Psoas muscle (tissue), 8 donors: ENCODE measurements at regions of chr1 and their contacts with region 1.

Region 1: GRCh38 chr1:15835741-15836510 is 11.6 kb upstream of the SPEN start:
- DNase-seq: peak; percentile 100
- ATAC-seq: peak; percentile 83 to 88 (median 86)
- H3K4me3 ChIP-seq: peak overlapping the region; percentile 92
- H3K27ac ChIP-seq: peak overlapping the region; percentile 100
- H3K4me1 ChIP-seq: peaks cover 11% of the 10 kb centered on the region
- H3K27me3 ChIP-seq: no peaks in the 10 kb centered on the region
- CTCF ChIP-seq: no peak

Region 2: DNA sequence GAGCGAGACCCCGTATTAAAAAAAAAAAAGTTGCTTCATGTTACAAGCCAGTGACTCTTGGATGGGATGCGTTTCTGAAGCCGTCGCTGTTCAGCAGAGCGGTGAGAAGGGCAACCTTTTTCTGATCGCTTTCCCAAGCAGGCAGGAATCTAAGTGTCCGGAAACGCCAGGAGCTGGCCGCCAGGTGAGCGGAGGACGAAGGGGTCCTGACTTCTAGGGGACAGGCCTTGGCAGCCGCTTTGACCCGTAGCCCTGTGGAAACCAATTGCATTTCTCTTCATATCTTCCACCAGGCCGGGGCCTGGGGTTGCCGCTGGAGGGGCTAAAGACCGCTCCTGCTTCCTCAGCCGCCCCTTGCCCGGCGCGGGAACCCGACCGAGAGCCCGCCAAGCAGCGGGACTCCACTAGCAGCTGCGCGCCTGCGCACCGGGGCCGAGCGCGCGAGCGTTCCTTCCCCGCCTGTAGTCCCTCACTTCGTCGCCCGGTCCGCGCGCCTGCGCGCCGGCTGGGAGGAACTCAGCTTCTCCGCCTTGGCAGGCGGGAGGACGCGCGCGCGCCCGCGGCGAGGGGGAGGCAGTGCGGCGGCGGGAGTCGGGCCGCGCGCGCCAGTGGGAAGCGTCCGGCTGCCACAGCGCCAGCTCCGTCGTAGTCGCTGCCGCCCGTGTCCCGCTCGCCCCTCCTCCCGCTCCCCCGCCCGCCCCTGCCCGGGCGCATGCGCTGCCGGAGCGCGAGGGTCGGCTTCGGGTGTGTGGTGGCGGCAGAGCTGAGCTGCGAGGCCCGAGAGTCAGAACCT is 11.4 kb after region 1 on chr1 and contains the start of gene SPEN:
- intact Hi-C with region 1: loop called in 1 of 2 experiments (anchors 1 kb)
- DNase-seq: peak; percentile 99 to 100
- ATAC-seq: peak; percentile 87 to 93 (median 88)
- H3K4me3 ChIP-seq: peak within 1 kb of the TSS; percentile 95
- H3K27ac ChIP-seq: peak within 1 kb of the TSS; percentile 99
- H3K4me1 ChIP-seq: peaks cover 36% of the 10 kb centered on the region
- H3K27me3 ChIP-seq: no peaks in the 10 kb centered on the region
- CTCF ChIP-seq: no peak
- total RNA-seq, gene SPEN: 38.3 to 46.5 (median 44.7) TPM

Region 3: GRCh38 chr1:15885701-15886610 is 50.0 kb after region 1 on chr1:
- intact Hi-C with region 1: loop called in 1 of 2 experiments (anchors 5 kb)
- DNase-seq: peak; percentile 97 to 98
- ATAC-seq: peak; percentile 90 to 94 (median 94)
- H3K4me3 ChIP-seq: peak overlapping the region; percentile 61
- H3K27ac ChIP-seq: peak overlapping the region; percentile 88
- H3K4me1 ChIP-seq: peaks cover 62% of the 10 kb centered on the region
- H3K27me3 ChIP-seq: no peaks in the 10 kb centered on the region
- CTCF ChIP-seq: no peak

Region 4: DNA sequence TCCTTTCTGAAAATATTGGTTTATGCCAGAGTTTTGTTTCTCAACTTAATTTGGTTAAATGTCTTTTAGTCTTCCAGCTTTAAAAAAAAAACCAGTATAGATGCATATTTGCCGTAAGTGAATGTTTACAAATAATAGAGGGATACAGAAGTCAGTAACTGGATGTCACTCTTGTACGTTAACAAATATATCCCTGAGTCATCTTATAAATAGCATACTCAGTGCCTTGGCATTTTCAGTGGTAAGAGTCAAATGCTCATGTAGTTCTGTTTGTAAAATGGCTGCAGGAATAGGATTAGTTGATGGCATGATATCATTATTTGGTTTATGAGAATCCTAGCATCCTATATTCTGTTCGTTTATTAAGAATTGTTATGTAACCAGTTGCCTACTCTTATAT is 67.0 kb after region 1 on chr1:
- intact Hi-C with region 1: loop called in 1 of 2 experiments (anchors 5 kb)
- DNase-seq: no peak
- ATAC-seq: peak; percentile 85 to 87 (median 85)
- H3K4me3 ChIP-seq: peak overlapping the region; percentile 43
- H3K27ac ChIP-seq: peak overlapping the region; percentile 91
- H3K4me1 ChIP-seq: peaks cover 76% of the 10 kb centered on the region
- H3K27me3 ChIP-seq: no peaks in the 10 kb centered on the region
- CTCF ChIP-seq: no peak